ENCODE measurements at regions of chr1 and their contacts with region 1.

Region 1: DNA sequence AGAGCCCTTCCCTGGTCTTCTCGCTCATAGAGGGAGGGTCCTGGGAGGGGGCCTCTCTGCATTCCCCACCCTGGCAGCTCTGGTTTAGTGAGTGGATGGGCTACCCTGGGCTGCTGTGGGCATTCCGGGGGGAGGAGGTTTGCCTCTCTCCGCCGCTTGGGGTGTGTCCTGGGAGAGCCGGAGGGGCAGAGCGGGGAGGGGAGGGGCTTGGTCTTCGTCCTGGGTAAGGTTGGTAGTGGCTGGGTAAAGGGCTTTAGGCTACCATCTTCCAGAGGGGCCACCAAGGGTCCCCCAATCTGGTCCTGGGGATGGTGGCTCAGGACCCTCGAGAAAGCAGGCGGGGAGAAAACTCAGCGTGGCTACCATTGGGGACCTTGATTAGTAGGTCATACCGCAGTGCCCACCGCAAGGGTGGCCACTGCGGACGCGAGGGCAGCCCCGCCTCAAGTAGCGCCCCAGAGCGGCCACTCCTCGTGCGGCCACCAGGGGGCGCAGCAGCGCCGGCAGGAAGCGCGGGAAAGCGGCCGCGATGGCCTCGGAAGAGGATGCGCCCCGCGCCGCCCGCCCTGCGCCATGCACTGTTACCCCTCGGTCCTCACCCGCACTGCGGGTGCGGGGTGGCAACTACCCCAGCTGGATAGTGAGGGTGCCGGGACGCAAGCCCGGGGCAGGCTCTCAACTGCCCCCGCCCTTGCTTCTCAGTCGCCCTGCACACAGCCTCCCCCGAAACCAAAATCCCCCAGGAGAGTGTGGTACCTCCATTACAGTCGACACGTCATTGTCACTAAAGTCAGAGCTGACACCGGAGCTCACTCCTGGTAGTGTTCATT is 44.1 kb upstream of the SLC25A33 start:
- DNase-seq: peak; percentile 40 to 86 (median 57)
- ATAC-seq: peak; percentile 86
- H3K4me3 ChIP-seq: peak overlapping the region; percentile 43
- H3K4me3 Mint-ChIP-seq: peak overlapping the region; percentile 72
- H3K27ac ChIP-seq: no peak overlapping the region
- H3K27ac Mint-ChIP-seq: no peak overlapping the region
- H3K4me1 ChIP-seq: peaks cover 13% of the 10 kb centered on the region
- H3K4me1 Mint-ChIP-seq: peaks cover 6% of the 10 kb centered on the region
- H3K27me3 ChIP-seq: no peaks in the 10 kb centered on the region
- H3K27me3 Mint-ChIP-seq: peaks cover 4% of the 10 kb centered on the region
- CTCF ChIP-seq: peak; percentile 93

Region 2: GRCh38 chr1:9145021-9145668 is 350.0 kb before region 1 on chr1:
- CTCF ChIA-PET with region 1: no interaction called
- POLR2A ChIA-PET with region 1: no interaction called
- intact Hi-C with region 1: loop called (anchors 1 to 2 kb)
- DNase-seq: peak in 2 of 14 experiments; percentile 12 to 27
- ATAC-seq: no peak
- H3K4me3 ChIP-seq: no peak overlapping the region
- H3K4me3 Mint-ChIP-seq: no peak overlapping the region
- H3K27ac ChIP-seq: no peak overlapping the region
- H3K27ac Mint-ChIP-seq: no peak overlapping the region
- H3K4me1 ChIP-seq: peaks cover 4% of the 10 kb centered on the region
- H3K4me1 Mint-ChIP-seq: peaks cover 4% of the 10 kb centered on the region
- H3K27me3 ChIP-seq: no peaks in the 10 kb centered on the region
- H3K27me3 Mint-ChIP-seq: no peaks in the 10 kb centered on the region
- CTCF ChIP-seq: no peak

Region 3: GRCh38 chr1:9267352-9267686 is 227.8 kb before region 1 on chr1:
- CTCF ChIA-PET with region 1: interaction called, 24 read pairs
- POLR2A ChIA-PET with region 1: interaction called, 3 read pairs
- intact Hi-C with region 1: loop called (anchors 1 to 2 kb)
- DNase-seq: no peak
- ATAC-seq: no peak
- H3K4me3 ChIP-seq: no peak overlapping the region
- H3K4me3 Mint-ChIP-seq: no peak overlapping the region
- H3K27ac ChIP-seq: no peak overlapping the region
- H3K27ac Mint-ChIP-seq: no peak overlapping the region
- H3K4me1 ChIP-seq: peaks cover 4% of the 10 kb centered on the region
- H3K4me1 Mint-ChIP-seq: peaks cover 7% of the 10 kb centered on the region
- H3K27me3 ChIP-seq: no peaks in the 10 kb centered on the region
- H3K27me3 Mint-ChIP-seq: no peaks in the 10 kb centered on the region
- CTCF ChIP-seq: no peak

Region 4: GRCh38 chr1:9428601-9429341 is 66.4 kb before region 1 on chr1:
- CTCF ChIA-PET with region 1: no interaction called
- POLR2A ChIA-PET with region 1: no interaction called
- intact Hi-C with region 1: loop called in 1 of 2 experiments (anchors 2 kb)
- DNase-seq: peak; percentile 99 to 100 (median 100)
- ATAC-seq: peak; percentile 72
- H3K4me3 ChIP-seq: peak overlapping the region; percentile 66
- H3K4me3 Mint-ChIP-seq: peak overlapping the region; percentile 91
- H3K27ac ChIP-seq: peak overlapping the region; percentile 72 to 82
- H3K27ac Mint-ChIP-seq: peak overlapping the region; percentile 92
- H3K4me1 ChIP-seq: peaks cover 55% of the 10 kb centered on the region
- H3K4me1 Mint-ChIP-seq: peaks cover 56% of the 10 kb centered on the region
- H3K27me3 ChIP-seq: no peaks in the 10 kb centered on the region
- H3K27me3 Mint-ChIP-seq: no peaks in the 10 kb centered on the region
- CTCF ChIP-seq: no peak

Region 5: DNA sequence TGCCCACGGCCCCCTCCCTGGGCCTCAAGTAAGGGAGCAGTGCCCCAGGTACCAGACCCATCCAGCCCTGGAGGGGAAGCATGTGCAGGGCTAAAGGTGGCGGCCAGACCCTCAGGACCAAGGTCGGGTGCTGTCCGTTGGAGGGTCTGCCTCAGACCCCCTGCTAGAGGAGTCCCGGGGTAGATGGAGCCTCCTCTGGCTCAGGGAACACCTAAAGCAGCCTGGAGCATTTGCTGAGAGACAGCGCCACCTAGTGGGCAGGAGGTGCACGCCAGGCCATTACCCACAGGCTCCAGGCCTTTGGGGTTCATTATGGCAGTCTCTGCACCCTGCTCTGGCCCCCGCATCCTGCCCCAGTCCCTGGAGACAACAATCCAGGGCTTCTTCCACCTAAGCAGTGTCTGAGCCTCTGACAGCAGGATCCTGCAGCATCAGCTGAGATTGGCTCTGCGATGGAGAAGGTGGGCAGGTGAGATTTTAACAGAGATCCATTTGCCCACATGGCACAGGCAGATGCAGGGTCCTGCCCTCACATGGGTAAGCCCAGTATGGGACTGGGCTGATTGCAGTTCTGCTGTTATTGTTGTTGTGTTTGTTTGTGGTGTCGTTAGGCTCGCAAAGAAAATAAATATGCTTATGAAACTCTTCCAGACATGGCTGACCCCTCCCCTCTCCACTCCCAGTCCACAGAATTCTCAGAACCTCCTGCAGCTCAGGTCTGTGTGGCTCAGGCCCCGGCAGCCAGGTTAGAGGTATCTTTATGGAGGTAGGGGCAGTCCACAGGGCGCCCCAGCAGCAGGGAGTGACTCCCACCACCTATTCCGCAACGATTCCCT is 372.5 kb after region 1 on chr1:
- CTCF ChIA-PET with region 1: no interaction called
- POLR2A ChIA-PET with region 1: no interaction called
- intact Hi-C with region 1: loop called in 1 of 2 experiments (anchors 2 kb)
- DNase-seq: peak; percentile 80 to 94 (median 88)
- ATAC-seq: peak; percentile 100
- H3K4me3 ChIP-seq: no peak overlapping the region
- H3K4me3 Mint-ChIP-seq: no peak overlapping the region
- H3K27ac ChIP-seq: no peak overlapping the region
- H3K27ac Mint-ChIP-seq: no peak overlapping the region
- H3K4me1 ChIP-seq: peaks cover 10% of the 10 kb centered on the region
- H3K4me1 Mint-ChIP-seq: peaks cover 5% of the 10 kb centered on the region
- H3K27me3 ChIP-seq: no peaks in the 10 kb centered on the region
- H3K27me3 Mint-ChIP-seq: no peaks in the 10 kb centered on the region
- CTCF ChIP-seq: peak; percentile 94

Measured in CD4-positive, alpha-beta T cell (primary cell).